ENCODE measurements at regions of chr4 and their contacts with region 1.

Region 1: GRCh38 chr4:109979920-109980717 is 67.4 kb downstream of the EGF start:
- DNase-seq: no peak
- H3K4me3 ChIP-seq: no peak overlapping the region
- H3K27ac ChIP-seq: no peak overlapping the region
- H3K4me1 ChIP-seq: no peaks in the 10 kb centered on the region
- H3K27me3 ChIP-seq: peaks cover 0 to 7% (median 0%) of the 10 kb centered on the region in 3 donors
- CTCF ChIP-seq: no peak
- EP300 ChIP-seq: no peak
- POLR2A ChIP-seq: no peak

Region 2: GRCh38 chr4:109411964-109412363 is 568.2 kb before region 1 on chr4:
- intact Hi-C with region 1: loop called (anchors 10 kb)
- DNase-seq: peak; percentile 49 to 66
- H3K4me3 ChIP-seq: no peak overlapping the region
- H3K27ac ChIP-seq: no peak overlapping the region
- H3K4me1 ChIP-seq: no peaks in the 10 kb centered on the region
- H3K27me3 ChIP-seq: no peaks in the 10 kb centered on the region
- CTCF ChIP-seq: no peak
- EP300 ChIP-seq: no peak
- POLR2A ChIP-seq: no peak

Region 3: GRCh38 chr4:110059556-110060191 is 79.6 kb after region 1 on chr4:
- intact Hi-C with region 1: no loop called
- DNase-seq: peak in 1 of 2 donors; percentile 44
- H3K4me3 ChIP-seq: no peak overlapping the region
- H3K27ac ChIP-seq: peak overlapping the region; percentile 5 to 67 (median 63)
- H3K4me1 ChIP-seq: peaks cover 3 to 15% (median 9%) of the 10 kb centered on the region in 4 donors
- H3K27me3 ChIP-seq: no peaks in the 10 kb centered on the region
- CTCF ChIP-seq: no peak
- EP300 ChIP-seq: no peak
- POLR2A ChIP-seq: no peak

Measured in stomach (tissue), 19 donors.